HEK293T (cell line): ENCODE measurements at regions of chr15 and their contacts with region 1.

Region 1: GRCh38 chr15:68924866-68925560 is 5.3 kb upstream of the SPESP1 start:
- DNase-seq: peak; percentile 87

Region 2: GRCh38 chr15:68907396-68907923 is 17.6 kb before region 1 on chr15:
- CTCF ChIA-PET with region 1: interaction called, 11 read pairs
- POLR2A ChIA-PET with region 1: no interaction called
- DNase-seq: no peak

Region 3: DNA sequence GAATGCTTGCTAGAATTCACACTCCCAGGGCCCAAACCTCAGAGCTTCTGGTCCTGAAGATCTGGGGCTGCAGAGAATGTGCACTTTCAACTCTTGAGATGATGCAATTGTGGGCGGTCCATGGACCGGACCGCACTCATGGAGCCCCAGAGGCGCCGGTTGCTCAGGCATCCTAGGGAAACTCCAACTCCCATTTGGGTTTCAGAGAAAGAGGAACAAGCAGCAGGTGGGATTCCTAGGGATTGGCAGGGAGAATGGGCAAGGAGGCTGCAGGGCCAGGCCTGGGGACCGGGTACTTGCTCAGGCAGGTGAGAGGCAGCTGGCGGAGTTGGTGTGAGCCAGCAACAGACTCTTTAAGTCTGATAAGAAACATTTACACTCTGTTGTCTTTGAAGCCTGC is 93.0 kb after region 1 on chr15:
- CTCF ChIA-PET with region 1: no interaction called
- POLR2A ChIA-PET with region 1: no interaction called
- DNase-seq: no peak

Region 4: GRCh38 chr15:69132977-69133861 is 208.2 kb after region 1 on chr15:
- CTCF ChIA-PET with region 1: no interaction called
- POLR2A ChIA-PET with region 1: no interaction called
- DNase-seq: no peak